PC-9 (cell line): ENCODE measurements at regions of chr4 and their contacts with region 1.

Region 1: GRCh38 chr4:82462415-82462831 is 32.0 kb downstream of the ENOPH1 start:
- DNase-seq: peak; percentile 51 to 74
- H3K4me3 ChIP-seq: no peak overlapping the region
- H3K27ac ChIP-seq: no peak overlapping the region
- H3K4me1 ChIP-seq: no peaks in the 10 kb centered on the region
- H3K27me3 ChIP-seq: no peaks in the 10 kb centered on the region
- CTCF ChIP-seq: peak; percentile 65

Region 2: GRCh38 chr4:82561745-82562515 is 99.5 kb after region 1 on chr4 and contains the start of gene TMEM150C:
- CTCF ChIA-PET with region 1: no interaction called
- POLR2A ChIA-PET with region 1: no interaction called
- intact Hi-C with region 1: loop called (anchors 10 kb)
- DNase-seq: peak in 1 of 2 experiments; percentile 18
- H3K4me3 ChIP-seq: peak within 1 kb of the TSS; percentile 31; the same call in 1 of the 2 replicates
- H3K27ac ChIP-seq: no peak within 1 kb of the TSS
- H3K4me1 ChIP-seq: no peaks in the 10 kb centered on the region
- H3K27me3 ChIP-seq: 0 out of 2 replicates have a peak, but pooled peaks cover 6% of the 10 kb centered on the region
- CTCF ChIP-seq: no peak
- total RNA-seq, gene TMEM150C: 0.74 and 0.98 TPM in 2 replicates

Region 3: DNA sequence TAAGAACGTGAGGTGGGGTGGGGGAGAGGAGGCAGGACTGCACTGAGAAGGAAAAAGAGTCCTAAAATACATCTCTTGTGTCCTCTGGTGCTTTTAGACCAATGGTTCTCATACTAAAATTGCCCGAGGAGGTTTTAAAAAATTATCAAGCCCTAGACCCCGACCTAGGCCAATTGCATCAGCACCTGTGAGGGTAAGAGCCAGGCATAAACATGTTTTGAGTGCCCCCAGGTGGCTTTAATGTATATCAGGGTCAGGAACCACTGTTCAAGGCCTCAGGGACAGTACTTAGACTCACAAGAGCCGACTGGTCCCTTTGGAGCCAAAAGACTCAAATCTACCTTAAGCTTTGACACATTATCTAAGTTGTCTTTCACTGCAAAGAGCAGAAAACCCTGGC is 136.9 kb after region 1 on chr4:
- CTCF ChIA-PET with region 1: no interaction called
- POLR2A ChIA-PET with region 1: no interaction called
- intact Hi-C with region 1: no loop called
- DNase-seq: no peak
- H3K4me3 ChIP-seq: no peak overlapping the region
- H3K27ac ChIP-seq: no peak overlapping the region
- H3K4me1 ChIP-seq: no peaks in the 10 kb centered on the region
- H3K27me3 ChIP-seq: no peaks in the 10 kb centered on the region
- CTCF ChIP-seq: no peak

Region 4: DNA sequence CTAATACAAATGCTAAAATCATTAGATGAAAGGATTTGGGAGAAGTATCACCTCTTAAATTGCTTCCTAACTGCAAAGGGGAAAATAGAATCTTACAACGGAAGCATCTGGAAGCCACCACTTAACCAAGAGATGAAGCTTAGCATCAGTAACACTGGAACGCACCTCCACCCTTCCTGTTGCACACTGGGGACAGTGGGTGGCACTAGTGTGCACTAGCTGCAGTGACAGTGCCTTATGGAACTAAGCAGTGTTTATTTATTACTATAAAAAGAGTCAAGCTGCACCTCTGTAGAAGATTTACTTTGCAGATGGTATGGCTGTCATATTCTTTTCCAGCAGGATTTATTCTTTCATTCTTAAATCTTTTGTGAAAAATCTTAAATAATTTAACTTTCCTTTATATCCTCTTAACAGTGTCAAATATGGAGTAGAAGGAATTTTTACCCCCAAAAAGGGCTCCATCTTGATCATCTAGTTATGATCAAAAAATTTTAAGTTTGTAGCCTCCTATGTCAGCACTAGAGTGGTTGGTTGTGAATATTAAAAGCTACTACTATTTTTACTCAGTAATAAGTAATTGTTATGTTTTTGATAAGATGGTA is 259.5 kb after region 1 on chr4:
- CTCF ChIA-PET with region 1: interaction called, 13 read pairs
- POLR2A ChIA-PET with region 1: no interaction called
- intact Hi-C with region 1: no loop called
- DNase-seq: peak in 1 of 2 experiments; percentile 18
- H3K4me3 ChIP-seq: no peak overlapping the region
- H3K27ac ChIP-seq: no peak overlapping the region
- H3K4me1 ChIP-seq: no peaks in the 10 kb centered on the region
- H3K27me3 ChIP-seq: no peaks in the 10 kb centered on the region
- CTCF ChIP-seq: peak; percentile 57

Region 5: GRCh38 chr4:82739316-82740179 is 277.1 kb after region 1 on chr4:
- CTCF ChIA-PET with region 1: no interaction called
- POLR2A ChIA-PET with region 1: no interaction called
- intact Hi-C with region 1: loop called (anchors 10 kb)
- DNase-seq: no peak
- H3K4me3 ChIP-seq: no peak overlapping the region
- H3K27ac ChIP-seq: no peak overlapping the region
- H3K4me1 ChIP-seq: peaks cover 8% of the 10 kb centered on the region
- H3K27me3 ChIP-seq: no peaks in the 10 kb centered on the region
- CTCF ChIP-seq: peak; percentile 51

Region 6: GRCh38 chr4:82798168-82799005 is 336.0 kb after region 1 on chr4 and contains the start of gene SCD5:
- CTCF ChIA-PET with region 1: interaction called, 18 read pairs
- POLR2A ChIA-PET with region 1: interaction called, 7 read pairs
- intact Hi-C with region 1: loop called (anchors 10 kb)
- DNase-seq: peak; percentile 55 to 73
- H3K4me3 ChIP-seq: peak within 1 kb of the TSS; percentile 66
- H3K27ac ChIP-seq: no peak within 1 kb of the TSS
- H3K4me1 ChIP-seq: peaks cover 8% of the 10 kb centered on the region
- H3K27me3 ChIP-seq: no peaks in the 10 kb centered on the region
- CTCF ChIP-seq: no peak
- total RNA-seq, gene SCD5: 34.3 and 41.1 TPM in 2 replicates

Region 7: GRCh38 chr4:82833696-82834313 is 371.4 kb after region 1 on chr4:
- CTCF ChIA-PET with region 1: no interaction called
- POLR2A ChIA-PET with region 1: no interaction called
- intact Hi-C with region 1: loop called (anchors 5 kb)
- DNase-seq: peak; percentile 42 to 88
- H3K4me3 ChIP-seq: no peak overlapping the region
- H3K27ac ChIP-seq: peak overlapping the region; percentile 75
- H3K4me1 ChIP-seq: peaks cover 18% of the 10 kb centered on the region
- H3K27me3 ChIP-seq: no peaks in the 10 kb centered on the region
- CTCF ChIP-seq: no peak

Region 8: DNA sequence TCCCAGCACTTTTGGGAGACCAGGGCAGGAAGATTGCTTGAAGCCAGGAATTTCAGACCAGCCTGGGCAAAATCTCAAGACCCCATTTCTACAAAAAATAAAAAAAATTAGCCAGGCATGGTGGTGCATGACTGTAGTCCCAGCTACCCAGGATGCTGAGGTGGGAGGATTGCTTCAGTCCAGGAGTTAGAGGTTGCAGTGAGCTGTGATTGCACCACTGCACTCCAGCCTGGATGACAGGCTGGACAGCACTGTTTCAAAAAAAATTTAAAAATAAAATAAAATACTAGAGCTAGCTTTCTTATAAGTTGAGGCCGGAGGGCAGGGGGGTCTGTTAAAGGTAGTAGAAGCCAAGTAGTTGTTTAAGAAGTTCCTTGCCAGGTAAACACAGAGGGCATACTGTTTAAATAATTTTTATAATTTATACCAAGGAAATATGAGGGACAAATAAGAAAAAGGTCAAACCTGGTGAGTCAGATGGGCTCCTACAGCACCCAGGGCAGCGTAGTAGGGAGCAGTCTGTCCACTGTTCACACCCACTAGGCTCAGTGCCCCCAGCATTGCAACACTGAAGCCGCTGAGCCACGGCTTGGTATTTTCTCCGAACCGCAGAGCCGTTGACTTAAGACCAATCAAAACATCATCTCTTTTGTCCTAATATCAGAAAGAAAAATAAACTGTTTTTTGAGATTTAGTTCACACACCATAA is 804.9 kb after region 1 on chr4:
- CTCF ChIA-PET with region 1: no interaction called
- POLR2A ChIA-PET with region 1: no interaction called
- intact Hi-C with region 1: loop called (anchors 10 kb)
- DNase-seq: peak; percentile 63 to 89
- H3K4me3 ChIP-seq: no peak overlapping the region
- H3K27ac ChIP-seq: peak overlapping the region; percentile 67
- H3K4me1 ChIP-seq: peaks cover 31% of the 10 kb centered on the region
- H3K27me3 ChIP-seq: no peaks in the 10 kb centered on the region
- CTCF ChIP-seq: no peak